ENCODE measurements at regions of chr6 and their contacts with region 1.

Region 1: DNA sequence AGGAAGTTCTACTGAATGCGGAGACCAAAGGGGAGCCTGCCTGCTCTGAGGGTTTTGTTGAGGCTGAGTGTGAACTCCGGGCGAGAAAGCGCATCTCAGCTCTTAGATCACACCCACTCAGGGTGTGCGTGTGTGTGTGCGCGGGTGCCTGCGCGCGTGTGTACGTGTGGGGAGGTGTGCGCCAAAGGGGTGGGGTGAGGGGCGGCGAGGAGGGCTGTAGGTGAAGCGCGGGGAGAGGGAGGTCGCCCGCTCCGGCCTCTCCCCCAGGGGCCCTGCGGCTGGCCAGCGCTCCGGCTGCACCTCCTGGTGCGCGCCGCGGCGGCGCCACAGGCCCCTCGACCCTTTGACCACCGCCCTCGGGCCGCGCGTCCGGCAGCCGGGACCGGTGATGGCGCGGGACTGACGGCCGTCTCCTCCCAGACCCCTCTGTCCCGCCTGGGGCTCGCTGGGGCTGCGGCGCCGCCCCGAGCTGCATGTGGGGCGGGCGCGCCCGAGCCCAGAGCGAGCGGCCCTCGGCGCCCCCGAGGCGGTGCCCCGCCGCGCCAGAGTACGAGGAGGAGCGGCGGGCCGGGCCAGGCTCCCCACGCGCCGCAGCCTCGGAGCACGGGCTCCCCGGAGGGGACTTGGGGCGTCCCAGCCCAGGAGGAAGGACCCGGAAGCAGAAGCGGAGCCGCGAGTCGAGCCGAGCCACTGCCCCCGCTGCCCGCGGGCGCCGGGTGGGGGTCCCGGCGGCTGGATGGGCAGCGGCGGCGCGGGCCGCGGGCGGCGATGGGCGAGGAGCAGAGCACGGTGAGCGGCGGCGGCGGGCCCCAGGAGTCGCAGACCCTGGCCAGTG is at the start of gene RNF217:
- DNase-seq: peak; percentile 88 to 89
- ATAC-seq: peak; percentile 89
- H3K4me3 ChIP-seq: peak within 1 kb of the TSS; percentile 95 to 99
- H3K27ac ChIP-seq: peak within 1 kb of the TSS; percentile 96 to 99
- H3K4me1 ChIP-seq: no peaks in the 10 kb centered on the region
- H3K27me3 ChIP-seq: no peaks in the 10 kb centered on the region
- total RNA-seq, gene RNF217: 52.6 to 79.5 TPM

Region 2: DNA sequence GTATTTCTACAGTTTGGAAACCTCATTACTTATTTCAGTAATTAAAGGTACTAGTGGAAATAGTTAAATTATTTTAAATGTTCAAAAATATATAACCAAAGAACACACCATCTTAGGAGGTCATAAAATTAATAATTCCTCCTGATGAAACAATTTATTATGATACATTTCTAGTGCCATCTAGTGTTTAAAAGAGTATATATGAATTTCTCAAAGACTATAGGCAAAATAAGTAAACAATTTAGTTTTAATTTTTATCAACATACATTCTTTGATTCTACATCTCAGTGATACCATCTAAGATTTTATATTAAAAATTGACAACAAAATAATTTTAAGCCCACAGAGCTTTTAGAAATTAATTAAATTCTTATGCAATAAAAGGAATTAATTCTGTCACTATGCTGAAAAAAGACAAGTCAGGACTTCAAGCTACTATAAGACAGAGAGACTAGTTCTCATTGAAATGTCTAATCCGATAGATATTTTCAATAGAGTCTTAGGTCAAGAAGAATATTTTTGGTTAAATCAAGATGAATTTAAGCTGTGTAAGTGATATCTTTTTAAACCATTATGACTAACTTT is 107.6 kb before region 1 on chr6:
- intact Hi-C with region 1: no loop called
- DNase-seq: no peak
- ATAC-seq: no peak
- H3K4me3 ChIP-seq: no peak overlapping the region
- H3K27ac ChIP-seq: no peak overlapping the region
- H3K4me1 ChIP-seq: no peaks in the 10 kb centered on the region
- H3K27me3 ChIP-seq: no peaks in the 10 kb centered on the region

Region 3: DNA sequence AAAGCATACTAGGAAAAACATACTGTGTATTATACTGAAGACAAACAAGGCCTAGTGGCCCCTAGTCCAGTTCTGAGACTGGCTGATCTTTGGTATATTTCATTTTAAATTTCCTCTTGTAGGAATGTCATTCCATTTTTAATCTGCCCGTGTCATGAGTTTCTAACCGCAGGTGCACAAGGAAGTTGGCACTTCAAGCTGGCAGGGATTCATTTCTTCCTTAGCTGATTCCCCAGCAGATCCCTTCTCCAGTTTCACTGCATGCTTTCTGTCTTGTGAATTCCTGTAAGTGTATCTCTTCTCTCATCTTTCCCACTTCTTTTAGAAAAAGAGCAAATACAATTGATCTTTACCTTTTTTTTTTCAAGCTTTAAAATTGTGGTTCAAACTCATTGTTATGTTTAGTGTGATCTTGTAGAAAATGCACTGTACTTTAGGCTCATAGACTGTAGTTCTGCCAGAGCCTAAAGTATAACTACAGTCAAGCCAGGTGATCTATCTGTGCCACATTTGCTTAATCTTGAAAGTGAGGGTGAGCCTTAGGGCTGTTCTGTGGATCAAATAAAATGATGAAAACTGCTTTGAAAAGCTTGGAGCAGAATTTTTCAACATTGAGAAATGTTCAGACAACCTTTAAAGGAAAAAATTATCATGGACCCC is 37.2 kb after region 1 on chr6:
- intact Hi-C with region 1: loop called in 1 of 2 experiments (anchors 5 kb)
- DNase-seq: no peak
- ATAC-seq: no peak
- H3K4me3 ChIP-seq: no peak overlapping the region
- H3K27ac ChIP-seq: no peak overlapping the region
- H3K4me1 ChIP-seq: peaks cover 0 to 1% of the 10 kb centered on the region in 2 donors
- H3K27me3 ChIP-seq: no peaks in the 10 kb centered on the region

Region 4: GRCh38 chr6:125008261-125008703 is 46.3 kb after region 1 on chr6:
- intact Hi-C with region 1: loop called in 1 of 2 experiments (anchors 5 kb)
- DNase-seq: no peak
- ATAC-seq: no peak
- H3K4me3 ChIP-seq: no peak overlapping the region
- H3K27ac ChIP-seq: peak overlapping the region in 1 of 2 donors; percentile 36
- H3K4me1 ChIP-seq: peaks cover 1 to 3% of the 10 kb centered on the region in 2 donors
- H3K27me3 ChIP-seq: no peaks in the 10 kb centered on the region

Region 5: GRCh38 chr6:125099211-125100073 is 137.4 kb after region 1 on chr6:
- intact Hi-C with region 1: loop called (anchors 5 kb)
- DNase-seq: peak; percentile 76 to 90
- ATAC-seq: peak; percentile 82
- H3K4me3 ChIP-seq: peak overlapping the region; percentile 22 to 41
- H3K27ac ChIP-seq: peak overlapping the region in 1 of 2 donors; percentile 34
- H3K4me1 ChIP-seq: peaks cover 3 to 10% of the 10 kb centered on the region in 2 donors
- H3K27me3 ChIP-seq: peaks cover 0 to 1% of the 10 kb centered on the region in 2 donors

Measured in aorta (tissue), 5 donors.